MCF 10A (cell line): ENCODE measurements at regions of chr2 and their contacts with region 1.

Region 1: GRCh38 chr2:85712849-85713602 is 18.9 kb downstream of the GNLY start:
- DNase-seq: peak; percentile 90
- H3K4me3 Mint-ChIP-seq: no peak overlapping the region
- H3K27ac Mint-ChIP-seq: peak overlapping the region; percentile 87
- H3K4me1 Mint-ChIP-seq: peaks cover 28% of the 10 kb centered on the region
- H3K27me3 Mint-ChIP-seq: no peaks in the 10 kb centered on the region
- CTCF ChIP-seq: no peak

Region 2: GRCh38 chr2:85723707-85724360 is 10.8 kb after region 1 on chr2:
- CTCF ChIA-PET with region 1: interaction called, 43 read pairs
- POLR2A ChIA-PET with region 1: interaction called, 12 read pairs
- intact Hi-C with region 1: no loop called
- DNase-seq: no peak
- H3K4me3 Mint-ChIP-seq: no peak overlapping the region
- H3K27ac Mint-ChIP-seq: peak overlapping the region; percentile 1
- H3K4me1 Mint-ChIP-seq: no peaks in the 10 kb centered on the region
- H3K27me3 Mint-ChIP-seq: no peaks in the 10 kb centered on the region
- CTCF ChIP-seq: no peak

Region 3: DNA sequence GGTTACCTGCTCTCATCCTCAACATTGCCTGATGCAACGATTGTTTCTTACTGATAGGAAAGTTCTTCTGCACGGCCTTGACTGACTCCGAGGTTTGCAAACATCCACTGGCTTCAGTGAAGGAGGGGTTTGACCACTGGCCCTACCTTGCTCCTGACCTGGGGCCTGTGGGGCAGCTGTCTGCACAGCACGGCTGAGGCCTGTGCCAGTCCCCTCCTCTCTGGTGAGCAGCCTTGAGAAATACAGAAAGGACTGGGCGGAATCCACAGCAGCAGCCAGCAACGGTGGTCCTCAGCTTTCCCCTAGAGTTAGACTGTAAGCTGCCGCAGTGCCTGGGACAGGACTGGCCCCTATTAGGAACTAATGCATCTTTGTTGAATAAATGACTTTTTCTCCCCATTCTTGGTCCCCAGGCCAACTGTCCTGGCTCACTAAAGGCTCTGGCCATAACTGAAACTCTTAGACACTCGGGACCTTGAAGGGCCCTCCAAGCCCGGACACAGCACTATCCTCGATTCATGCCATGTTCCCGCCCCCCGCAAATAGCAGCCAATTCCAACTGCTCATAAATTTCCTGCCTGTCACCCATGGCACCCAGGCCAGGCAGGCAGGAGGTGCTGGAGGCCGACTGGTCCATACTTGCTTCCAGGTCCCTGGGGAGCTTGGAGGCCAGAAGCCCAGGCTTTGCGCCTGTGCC is 67.4 kb after region 1 on chr2:
- CTCF ChIA-PET with region 1: no interaction called
- POLR2A ChIA-PET with region 1: no interaction called
- intact Hi-C with region 1: no loop called
- DNase-seq: no peak
- H3K4me3 Mint-ChIP-seq: no peak overlapping the region
- H3K27ac Mint-ChIP-seq: no peak overlapping the region
- H3K4me1 Mint-ChIP-seq: peaks cover 11% of the 10 kb centered on the region
- H3K27me3 Mint-ChIP-seq: no peaks in the 10 kb centered on the region
- CTCF ChIP-seq: no peak

Region 4: GRCh38 chr2:85843543-85843942 is 130.5 kb after region 1 on chr2:
- CTCF ChIA-PET with region 1: no interaction called
- POLR2A ChIA-PET with region 1: no interaction called
- intact Hi-C with region 1: no loop called
- DNase-seq: peak; percentile 28
- H3K4me3 Mint-ChIP-seq: no peak overlapping the region
- H3K27ac Mint-ChIP-seq: no peak overlapping the region
- H3K4me1 Mint-ChIP-seq: no peaks in the 10 kb centered on the region
- H3K27me3 Mint-ChIP-seq: no peaks in the 10 kb centered on the region
- CTCF ChIP-seq: peak; percentile 53

Region 5: GRCh38 chr2:85954590-85955458 is 241.8 kb after region 1 on chr2:
- CTCF ChIA-PET with region 1: no interaction called
- POLR2A ChIA-PET with region 1: no interaction called
- intact Hi-C with region 1: no loop called
- DNase-seq: no peak
- H3K4me3 Mint-ChIP-seq: no peak overlapping the region
- H3K27ac Mint-ChIP-seq: no peak overlapping the region
- H3K4me1 Mint-ChIP-seq: peaks cover 14% of the 10 kb centered on the region
- H3K27me3 Mint-ChIP-seq: no peaks in the 10 kb centered on the region
- CTCF ChIP-seq: no peak